Activated CD8-positive, alpha-beta memory T cell treated with anti-CD3 and anti-CD28 coated beads, Interleukin-2, amount 10 ng/mL, durations not matched to agents 7 days and 5 days (primary cell): ENCODE measurements at regions of chr5 and their contacts with region 1.

Region 1: GRCh38 chr5:67165526-67166459 is 30.8 kb downstream of the CD180 start:
- DNase-seq: peak; percentile 96
- ATAC-seq: peak; percentile 82
- H3K4me3 Mint-ChIP-seq: peak overlapping the region; percentile 87
- H3K27ac Mint-ChIP-seq: peak overlapping the region; percentile 100
- H3K4me1 Mint-ChIP-seq: peaks cover 63% of the 10 kb centered on the region
- H3K27me3 Mint-ChIP-seq: no peaks in the 10 kb centered on the region

Region 2: DNA sequence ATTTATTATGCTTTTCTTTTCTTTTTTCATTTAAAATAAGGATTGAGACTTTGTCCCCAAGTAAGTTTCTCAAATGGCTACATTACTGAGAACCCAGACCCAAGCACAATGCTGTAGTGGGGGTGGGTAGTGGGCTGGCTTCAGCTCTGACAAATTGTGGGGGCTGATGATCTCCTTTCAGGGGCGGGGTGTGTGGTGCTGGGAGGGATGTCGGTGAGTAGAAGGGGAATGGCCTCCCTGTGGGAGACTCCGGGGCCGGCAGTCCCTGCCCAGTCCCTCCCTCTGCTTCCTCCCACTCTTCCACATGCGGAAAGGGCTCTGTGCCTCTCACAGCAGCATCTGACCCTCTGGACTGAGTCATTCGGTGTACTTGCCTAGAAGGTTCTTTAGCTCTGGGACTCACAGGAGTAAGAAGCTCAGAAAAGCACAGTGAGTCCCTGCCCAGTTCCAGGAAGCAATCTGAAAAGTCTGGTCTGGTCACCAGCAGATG is 16.6 kb after region 1 on chr5:
- CTCF ChIA-PET with region 1: interaction called, 19 read pairs
- DNase-seq: no peak
- ATAC-seq: peak; percentile 56
- H3K4me3 Mint-ChIP-seq: no peak overlapping the region
- H3K27ac Mint-ChIP-seq: peak overlapping the region; percentile 87
- H3K4me1 Mint-ChIP-seq: peaks cover 54% of the 10 kb centered on the region
- H3K27me3 Mint-ChIP-seq: no peaks in the 10 kb centered on the region

Region 3: DNA sequence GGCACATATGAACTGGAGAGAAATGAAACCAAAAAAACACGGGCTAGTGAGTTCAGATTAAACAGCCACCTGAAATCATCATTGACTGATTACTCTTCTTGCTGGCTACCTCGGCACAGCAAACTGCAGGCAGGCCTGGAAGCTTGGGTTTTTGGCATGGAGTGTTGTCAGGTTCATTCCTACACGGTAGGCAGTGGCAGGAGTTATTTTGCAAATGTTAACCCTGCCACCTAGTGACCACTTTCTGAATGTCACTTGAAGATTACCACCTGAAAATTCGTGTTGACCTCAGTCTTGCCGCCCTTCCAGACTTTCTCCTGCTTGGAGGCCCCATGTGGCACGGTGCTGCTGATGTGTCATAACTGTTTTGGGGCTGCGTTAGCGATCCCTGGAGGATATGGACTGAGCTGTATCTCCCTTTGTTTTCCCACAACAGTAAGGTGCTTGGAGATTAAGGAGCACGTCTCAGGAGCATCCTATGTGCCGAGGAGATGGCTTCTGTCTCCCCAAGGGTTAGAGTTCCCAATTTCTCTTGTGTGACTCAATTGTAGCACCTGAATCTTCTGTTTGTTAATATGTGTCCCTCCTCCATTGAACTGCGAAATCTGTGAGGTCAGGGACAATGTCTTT is 43.5 kb after region 1 on chr5:
- CTCF ChIA-PET with region 1: interaction called, 521 read pairs
- DNase-seq: peak; percentile 79
- ATAC-seq: peak; percentile 35
- H3K4me3 Mint-ChIP-seq: no peak overlapping the region
- H3K27ac Mint-ChIP-seq: peak overlapping the region; percentile 77
- H3K4me1 Mint-ChIP-seq: peaks cover 66% of the 10 kb centered on the region
- H3K27me3 Mint-ChIP-seq: peaks cover 2% of the 10 kb centered on the region

Region 4: DNA sequence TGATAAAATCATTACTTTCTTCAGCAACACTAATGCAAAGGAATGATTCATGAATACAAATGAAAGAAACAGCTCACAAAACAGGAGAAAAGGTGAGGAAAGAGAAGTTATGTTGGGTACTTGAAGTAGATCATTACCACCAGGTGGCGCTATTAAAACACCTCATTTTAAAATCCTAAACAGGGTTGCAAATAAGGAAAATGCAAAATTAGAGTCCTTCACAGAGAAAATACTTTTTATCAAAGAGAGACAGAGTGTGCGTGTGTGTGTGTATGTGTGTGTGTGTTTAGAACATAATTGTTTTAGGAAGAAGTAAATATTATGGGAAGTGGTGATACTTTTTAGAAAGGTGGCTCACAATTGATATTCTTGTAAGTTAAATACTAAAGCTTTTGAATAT is 80.3 kb after region 1 on chr5:
- CTCF ChIA-PET with region 1: interaction called, 10 read pairs
- DNase-seq: no peak
- ATAC-seq: no peak
- H3K4me3 Mint-ChIP-seq: no peak overlapping the region
- H3K27ac Mint-ChIP-seq: no peak overlapping the region
- H3K4me1 Mint-ChIP-seq: peaks cover 20% of the 10 kb centered on the region
- H3K27me3 Mint-ChIP-seq: no peaks in the 10 kb centered on the region

Region 5: GRCh38 chr5:67301285-67301903 is 135.6 kb after region 1 on chr5:
- CTCF ChIA-PET with region 1: no interaction called
- DNase-seq: no peak
- ATAC-seq: no peak
- H3K4me3 Mint-ChIP-seq: no peak overlapping the region
- H3K27ac Mint-ChIP-seq: no peak overlapping the region
- H3K4me1 Mint-ChIP-seq: peaks cover 6% of the 10 kb centered on the region
- H3K27me3 Mint-ChIP-seq: peaks cover 3% of the 10 kb centered on the region